Heart left ventricle (tissue), 16 donors: ENCODE measurements at regions of chr2 and their contacts with region 1.

Region 1: GRCh38 chr2:217489145-217489960 is 513.4 kb downstream of the TNS1 start:
- DNase-seq: no peak
- ATAC-seq: no peak
- H3K4me3 ChIP-seq: no peak overlapping the region
- H3K27ac ChIP-seq: no peak overlapping the region
- H3K4me1 ChIP-seq: peaks cover 0 to 4% (median 0%) of the 10 kb centered on the region in 12 donors
- H3K27me3 ChIP-seq: no peaks in the 10 kb centered on the region
- CTCF ChIP-seq: no peak
- POLR2A ChIP-seq: no peak

Region 2: GRCh38 chr2:217177720-217178119 is 311.6 kb before region 1 on chr2:
- intact Hi-C with region 1: loop called in 2 of 10 experiments (anchors 10 kb)
- DNase-seq: no peak
- ATAC-seq: no peak
- H3K4me3 ChIP-seq: no peak overlapping the region
- H3K27ac ChIP-seq: no peak overlapping the region
- H3K4me1 ChIP-seq: peaks cover 0 to 2% (median 0%) of the 10 kb centered on the region in 12 donors
- H3K27me3 ChIP-seq: peaks cover 0 to 10% (median 0%) of the 10 kb centered on the region in 9 donors
- CTCF ChIP-seq: no peak
- POLR2A ChIP-seq: no peak

Region 3: DNA sequence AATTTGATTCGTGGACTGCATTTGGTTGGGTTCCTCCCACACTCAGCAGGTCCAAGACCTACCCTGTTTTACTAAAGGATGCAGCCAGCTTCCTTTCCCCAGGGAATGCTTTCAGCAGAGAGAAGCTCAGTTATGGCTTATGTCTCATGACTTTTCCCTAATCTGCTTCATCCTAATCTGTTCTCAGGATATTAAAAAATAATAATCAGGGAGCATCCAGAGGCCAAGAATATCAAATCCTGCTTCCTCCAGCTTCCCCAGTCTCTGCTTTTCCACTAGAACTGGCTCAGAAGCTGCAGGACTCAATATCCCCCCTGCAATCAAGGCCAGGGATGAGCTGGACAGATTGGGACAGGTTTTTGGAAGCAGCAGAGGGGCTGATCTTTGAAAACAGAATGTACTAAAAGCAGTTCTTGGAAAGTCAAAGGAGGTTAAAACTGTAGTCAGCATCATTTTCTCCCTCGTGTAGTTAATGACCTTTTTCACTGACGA is 302.6 kb before region 1 on chr2:
- intact Hi-C with region 1: loop called in 1 of 10 experiments (anchors 10 kb)
- DNase-seq: peak in 4 of 5 donors; percentile 46 to 74 (median 66)
- ATAC-seq: peak; percentile 83 to 91 (median 88)
- H3K4me3 ChIP-seq: no peak overlapping the region
- H3K27ac ChIP-seq: peak overlapping the region in 10 of 12 donors; percentile 24 to 77 (median 48)
- H3K4me1 ChIP-seq: peaks cover 0 to 22% (median 8%) of the 10 kb centered on the region in 12 donors
- H3K27me3 ChIP-seq: peaks cover 0 to 3% (median 0%) of the 10 kb centered on the region in 9 donors
- CTCF ChIP-seq: no peak
- POLR2A ChIP-seq: no peak

Region 4: DNA sequence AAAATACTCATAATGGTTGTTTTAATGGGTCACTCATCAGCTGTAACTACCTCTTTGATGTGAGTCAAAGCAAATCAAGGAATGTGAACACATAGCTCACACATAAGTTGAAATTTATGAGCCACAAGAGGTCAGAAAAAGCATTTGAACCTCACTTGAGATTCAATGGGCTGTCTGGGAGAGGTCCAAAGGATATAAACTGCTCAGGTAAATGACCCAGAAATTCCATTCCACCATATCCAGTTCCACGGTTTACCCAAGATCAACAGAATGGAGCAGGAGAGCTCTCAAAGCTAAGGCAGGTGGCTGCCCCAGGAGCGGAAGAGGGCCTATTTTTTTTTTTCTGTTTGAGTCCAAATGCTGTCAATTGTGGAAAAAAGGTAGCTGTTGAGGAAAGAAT is 49.4 kb after region 1 on chr2:
- intact Hi-C with region 1: loop called in 1 of 10 experiments (anchors 2 kb)
- DNase-seq: no peak
- ATAC-seq: no peak
- H3K4me3 ChIP-seq: no peak overlapping the region
- H3K27ac ChIP-seq: no peak overlapping the region
- H3K4me1 ChIP-seq: peaks cover 0 to 17% (median 0%) of the 10 kb centered on the region in 12 donors
- H3K27me3 ChIP-seq: no peaks in the 10 kb centered on the region
- CTCF ChIP-seq: no peak
- POLR2A ChIP-seq: no peak

Region 5: DNA sequence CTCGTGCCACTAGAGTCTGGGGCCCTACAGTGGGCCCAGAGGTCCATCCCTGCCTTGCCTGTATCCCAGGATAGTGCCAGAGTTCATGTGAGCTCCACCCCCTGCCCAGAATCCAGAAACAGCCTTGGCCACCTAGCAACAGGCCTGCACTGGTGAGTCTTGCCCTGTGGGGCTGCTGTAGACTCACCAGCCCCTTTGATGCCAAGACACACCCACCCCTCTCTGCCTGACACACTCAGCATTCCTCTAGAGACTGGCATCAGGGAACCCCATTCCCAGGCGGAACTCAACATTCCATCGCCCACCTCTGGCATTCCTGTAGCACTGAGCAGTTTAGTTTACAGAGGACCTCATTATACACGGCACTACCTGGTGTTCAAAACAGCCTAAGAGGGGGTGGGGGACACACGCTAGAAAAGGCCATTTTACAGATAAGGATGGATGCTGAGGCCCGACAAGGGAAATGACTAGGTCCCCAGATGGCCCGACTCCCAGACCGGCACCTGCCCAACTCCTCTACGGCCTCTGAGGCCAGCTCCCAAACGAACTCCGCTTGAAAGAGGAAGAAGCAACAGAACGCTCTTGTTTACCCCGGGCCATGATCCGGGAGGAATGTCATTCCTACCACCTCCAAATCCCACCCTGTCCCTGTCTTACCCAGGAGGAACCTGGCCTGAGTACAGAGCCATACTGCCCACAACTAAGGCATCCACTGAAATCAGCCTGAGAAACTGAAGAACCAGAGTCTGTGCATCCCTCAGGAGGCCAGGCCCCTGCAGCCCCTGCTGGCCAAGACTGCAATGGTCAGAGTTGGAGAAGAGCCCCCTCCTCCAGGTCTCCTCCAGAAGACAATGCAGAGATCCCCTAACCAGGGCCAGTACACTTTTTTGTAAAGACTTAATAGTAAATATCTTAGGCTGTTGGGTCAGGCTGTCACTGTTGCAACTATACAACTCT is 333.2 kb after region 1 on chr2:
- intact Hi-C with region 1: no loop called
- DNase-seq: peak in 2 of 5 donors; percentile 38 to 54
- ATAC-seq: peak in 3 of 4 donors; percentile 6 to 19 (median 8)
- H3K4me3 ChIP-seq: no peak overlapping the region
- H3K27ac ChIP-seq: peak overlapping the region in 11 of 12 donors; percentile 26 to 90 (median 46)
- H3K4me1 ChIP-seq: peaks cover 12 to 100% (median 92%) of the 10 kb centered on the region in 12 donors
- H3K27me3 ChIP-seq: no peaks in the 10 kb centered on the region
- CTCF ChIP-seq: no peak
- POLR2A ChIP-seq: no peak